ENCODE measurements at regions of chr2 and their contacts with region 1.

Region 1: GRCh38 chr2:60550178-60550983 is 3.1 kb downstream of the BCL11A start:
- DNase-seq: peak; percentile 68
- ATAC-seq: peak; percentile 56
- H3K4me3 Mint-ChIP-seq: peak overlapping the region; percentile 96
- H3K27ac Mint-ChIP-seq: peak overlapping the region; percentile 98
- H3K4me1 Mint-ChIP-seq: peaks cover 41% of the 10 kb centered on the region
- H3K27me3 Mint-ChIP-seq: no peaks in the 10 kb centered on the region
- CTCF ChIP-seq: peak; percentile 32

Region 2: GRCh38 chr2:58762176-58762781 is 1788.1 kb before region 1 on chr2:
- CTCF ChIA-PET with region 1: interaction called, 4 read pairs
- POLR2A ChIA-PET with region 1: interaction called, 10 read pairs
- intact Hi-C with region 1: no loop called
- DNase-seq: peak; percentile 37
- ATAC-seq: peak; percentile 75
- H3K4me3 Mint-ChIP-seq: no peak overlapping the region
- H3K27ac Mint-ChIP-seq: no peak overlapping the region
- H3K4me1 Mint-ChIP-seq: peaks cover 6% of the 10 kb centered on the region
- H3K27me3 Mint-ChIP-seq: no peaks in the 10 kb centered on the region
- CTCF ChIP-seq: peak; percentile 60

Region 3: GRCh38 chr2:59789505-59789904 is 760.9 kb before region 1 on chr2:
- CTCF ChIA-PET with region 1: interaction called, 3 read pairs
- POLR2A ChIA-PET with region 1: interaction called, 4 read pairs
- intact Hi-C with region 1: loop called (anchors 10 kb)
- DNase-seq: no peak
- ATAC-seq: no peak
- H3K4me3 Mint-ChIP-seq: no peak overlapping the region
- H3K27ac Mint-ChIP-seq: no peak overlapping the region
- H3K4me1 Mint-ChIP-seq: no peaks in the 10 kb centered on the region
- H3K27me3 Mint-ChIP-seq: no peaks in the 10 kb centered on the region
- CTCF ChIP-seq: no peak

Region 4: DNA sequence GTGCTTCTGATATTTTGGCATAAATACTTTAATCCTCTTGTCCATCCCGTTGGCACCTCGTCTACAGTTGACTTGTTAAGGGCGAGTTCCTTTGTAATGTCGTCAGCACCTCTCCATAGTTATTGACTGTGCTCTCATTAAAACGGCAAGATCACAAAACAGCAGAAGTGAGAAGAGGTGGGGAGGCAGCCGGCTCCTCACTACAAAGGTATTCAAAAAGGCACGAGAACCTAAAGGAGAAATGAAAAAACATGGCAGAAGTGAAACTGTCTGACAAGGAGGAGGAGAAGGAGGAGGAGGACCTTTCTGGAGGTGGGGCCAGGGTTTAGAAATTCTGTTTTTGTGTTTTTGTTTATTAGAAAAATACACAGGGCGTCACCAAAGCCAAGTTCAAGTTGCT is 232.5 kb before region 1 on chr2:
- CTCF ChIA-PET with region 1: interaction called, 3 read pairs
- POLR2A ChIA-PET with region 1: interaction called, 5 read pairs
- intact Hi-C with region 1: loop called (anchors 2 kb)
- DNase-seq: no peak
- ATAC-seq: peak; percentile 85
- H3K4me3 Mint-ChIP-seq: peak overlapping the region; percentile 59
- H3K27ac Mint-ChIP-seq: peak overlapping the region; percentile 82
- H3K4me1 Mint-ChIP-seq: peaks cover 82% of the 10 kb centered on the region
- H3K27me3 Mint-ChIP-seq: no peaks in the 10 kb centered on the region
- CTCF ChIP-seq: no peak

Region 5: GRCh38 chr2:60439219-60439974 is 111.0 kb before region 1 on chr2:
- CTCF ChIA-PET with region 1: interaction called, 26 read pairs
- POLR2A ChIA-PET with region 1: interaction called, 128 read pairs
- intact Hi-C with region 1: loop called (anchors 1 kb)
- DNase-seq: peak; percentile 72
- ATAC-seq: peak; percentile 93
- H3K4me3 Mint-ChIP-seq: peak overlapping the region; percentile 76
- H3K27ac Mint-ChIP-seq: peak overlapping the region; percentile 99
- H3K4me1 Mint-ChIP-seq: peaks cover 83% of the 10 kb centered on the region
- H3K27me3 Mint-ChIP-seq: no peaks in the 10 kb centered on the region
- CTCF ChIP-seq: no peak

Region 6: GRCh38 chr2:60515721-60516226 is 34.6 kb before region 1 on chr2:
- CTCF ChIA-PET with region 1: interaction called, 8 read pairs
- POLR2A ChIA-PET with region 1: interaction called, 30 read pairs
- intact Hi-C with region 1: loop called (anchors 1 kb)
- DNase-seq: peak; percentile 57
- ATAC-seq: peak; percentile 76
- H3K4me3 Mint-ChIP-seq: peak overlapping the region; percentile 68
- H3K27ac Mint-ChIP-seq: peak overlapping the region; percentile 91
- H3K4me1 Mint-ChIP-seq: peaks cover 97% of the 10 kb centered on the region
- H3K27me3 Mint-ChIP-seq: no peaks in the 10 kb centered on the region
- CTCF ChIP-seq: no peak

Region 7: DNA sequence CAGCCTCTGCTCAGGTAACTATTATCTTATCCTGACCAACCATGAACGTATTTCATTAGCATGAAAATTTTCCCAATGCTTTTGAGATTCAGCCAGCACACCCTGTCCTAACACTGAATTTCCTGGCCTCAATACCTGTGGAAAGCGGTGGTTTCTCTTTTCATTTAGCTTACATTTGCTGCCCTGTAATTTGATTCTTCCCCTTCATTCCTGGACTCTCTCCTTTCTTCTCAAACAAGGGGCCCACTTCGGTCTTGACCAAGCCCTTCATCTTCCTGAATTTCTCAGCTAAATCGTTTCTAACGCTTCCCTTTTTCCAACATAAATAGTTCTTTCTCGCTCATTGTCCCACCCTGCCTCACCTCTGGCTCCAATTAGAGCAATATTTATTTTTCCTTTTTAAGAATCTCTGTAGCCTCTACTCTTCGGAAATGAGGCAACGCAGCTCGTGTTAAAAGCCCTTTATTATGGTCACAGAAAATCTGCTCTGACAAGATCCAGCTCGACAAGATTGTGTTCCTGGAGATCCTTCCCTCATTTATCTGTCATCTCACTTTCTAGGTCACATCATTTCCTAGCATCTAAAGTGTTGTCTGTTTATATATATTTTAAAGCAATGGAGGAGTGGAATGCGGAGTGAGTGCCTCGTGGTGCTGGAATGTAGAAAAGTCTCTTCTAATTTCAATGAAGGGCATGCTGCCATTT is 52.6 kb after region 1 on chr2:
- CTCF ChIA-PET with region 1: no interaction called
- POLR2A ChIA-PET with region 1: no interaction called
- intact Hi-C with region 1: no loop called
- DNase-seq: no peak
- ATAC-seq: no peak
- H3K4me3 Mint-ChIP-seq: no peak overlapping the region
- H3K27ac Mint-ChIP-seq: no peak overlapping the region
- H3K4me1 Mint-ChIP-seq: peaks cover 9% of the 10 kb centered on the region
- H3K27me3 Mint-ChIP-seq: peaks cover 8% of the 10 kb centered on the region
- CTCF ChIP-seq: no peak

Region 8: DNA sequence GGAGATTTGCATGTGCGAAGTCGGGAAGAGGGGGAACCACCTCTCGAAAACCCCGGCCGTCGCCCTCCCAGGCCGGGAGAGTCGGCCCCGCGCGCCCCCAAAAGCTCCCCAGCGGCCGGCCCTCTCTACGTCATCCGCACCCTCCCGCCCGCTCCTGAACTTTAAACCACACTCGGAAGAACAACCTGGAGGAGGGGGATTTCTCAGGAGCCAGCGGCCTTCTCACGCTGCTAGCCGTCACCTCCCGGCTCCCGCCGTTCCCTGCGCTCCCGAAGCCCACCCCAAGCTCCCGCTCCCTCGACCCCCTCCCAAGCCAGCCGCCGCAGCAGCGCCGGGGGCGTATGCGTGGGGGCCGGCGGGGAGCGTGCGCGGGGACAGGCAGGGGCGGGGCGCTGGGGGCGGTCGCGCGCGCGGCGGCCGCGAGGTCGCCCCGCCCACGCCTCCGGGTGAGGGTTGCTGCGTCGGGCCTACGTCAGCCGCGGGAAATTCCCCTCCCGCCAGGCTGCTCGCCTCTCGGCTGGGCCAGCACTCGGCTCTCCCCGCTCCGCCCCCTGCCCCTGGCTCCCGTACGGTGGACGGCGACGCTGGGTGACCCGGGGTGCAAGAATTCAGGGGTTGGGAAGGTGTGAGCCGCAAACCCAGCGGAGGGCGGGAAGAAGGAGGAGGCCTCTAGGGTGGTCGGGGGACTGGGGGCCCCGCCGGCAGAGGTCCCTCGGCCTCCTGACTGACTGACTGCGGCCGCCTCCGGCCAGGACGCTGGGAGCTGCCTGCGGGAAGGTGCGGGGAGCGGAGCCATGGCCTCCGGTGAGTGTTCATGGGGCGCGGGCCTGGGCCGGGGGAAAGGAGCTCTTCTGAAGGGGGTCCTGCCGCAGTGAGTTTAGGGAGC is 330.9 kb after region 1 on chr2 and contains the start of gene REL:
- CTCF ChIA-PET with region 1: no interaction called
- POLR2A ChIA-PET with region 1: no interaction called
- intact Hi-C with region 1: loop called (anchors 2 kb)
- DNase-seq: peak; percentile 88
- ATAC-seq: peak; percentile 73
- H3K4me3 Mint-ChIP-seq: peak within 1 kb of the TSS; percentile 98
- H3K27ac Mint-ChIP-seq: peak within 1 kb of the TSS; percentile 95
- H3K4me1 Mint-ChIP-seq: peaks cover 36% of the 10 kb centered on the region
- H3K27me3 Mint-ChIP-seq: no peaks in the 10 kb centered on the region
- CTCF ChIP-seq: no peak
- total RNA-seq, gene REL: 211 and 238 TPM in 2 replicates

Measured in activated B cell treated with CpG ODN at 0.5 μM for 24 hours (primary cell).